Sciatic nerve (tissue), 2 donors: ENCODE measurements at regions of chr11 and their contacts with region 1.

Region 1: DNA sequence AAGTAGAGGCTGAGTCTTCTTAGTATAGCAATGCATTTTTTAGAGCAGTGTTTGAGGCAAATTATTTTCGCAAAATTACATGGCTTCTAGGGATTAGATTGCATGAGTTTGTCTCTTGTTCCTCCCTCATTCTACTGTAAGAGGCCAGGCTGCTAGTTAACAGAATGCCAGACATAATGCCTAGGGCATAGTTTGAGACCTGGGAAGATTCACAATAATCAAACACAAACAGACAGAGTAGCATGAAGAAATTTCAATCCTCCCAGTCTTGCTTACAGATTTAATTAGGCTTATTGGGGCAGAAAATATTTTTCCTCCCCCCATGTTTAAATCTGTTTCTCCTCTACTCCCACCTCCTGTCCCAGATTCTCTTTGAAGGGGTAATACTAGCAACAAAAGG is 48.3 kb downstream of the ARHGEF12 start:
- DNase-seq: no peak
- ATAC-seq: no peak

Region 2: GRCh38 chr11:120061761-120062560 is 322.5 kb before region 1 on chr11:
- intact Hi-C with region 1: no loop called
- DNase-seq: no peak
- ATAC-seq: no peak

Region 3: DNA sequence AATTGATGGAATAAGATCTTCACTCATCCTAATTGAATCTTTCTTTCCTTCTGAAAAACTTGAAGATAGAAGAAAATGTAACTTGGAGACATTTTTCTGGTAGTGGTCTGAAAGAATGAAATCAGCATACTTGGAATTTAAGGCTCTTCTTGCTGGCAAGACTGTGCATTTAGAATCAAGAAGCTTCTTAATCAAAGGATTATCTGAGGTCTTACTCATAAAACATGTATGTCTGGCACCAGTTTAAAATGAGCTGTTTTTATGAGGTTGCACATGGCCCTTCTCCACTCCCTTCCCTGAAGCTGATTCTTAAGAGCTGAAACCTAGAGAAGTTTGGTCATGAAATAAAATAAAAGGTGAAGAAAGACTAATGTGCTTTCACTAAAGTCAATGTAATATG is 29.0 kb after region 1 on chr11:
- intact Hi-C with region 1: loop called (anchors 1 kb)
- DNase-seq: no peak
- ATAC-seq: no peak